Activated T-helper 2 cell treated with anti-CD3 and anti-CD28 coated beads, Interferon-gamma antibody, Interleukin-2, Interleukin-4, amounts not matched to agents 10 μg/mL and 5 μg/mL and 100 μg/mL, durations not matched to agents 14 hours and 24 hours and 36 hours (primary cell): ENCODE measurements at regions of chr7 and their contacts with region 1.

Region 1: DNA sequence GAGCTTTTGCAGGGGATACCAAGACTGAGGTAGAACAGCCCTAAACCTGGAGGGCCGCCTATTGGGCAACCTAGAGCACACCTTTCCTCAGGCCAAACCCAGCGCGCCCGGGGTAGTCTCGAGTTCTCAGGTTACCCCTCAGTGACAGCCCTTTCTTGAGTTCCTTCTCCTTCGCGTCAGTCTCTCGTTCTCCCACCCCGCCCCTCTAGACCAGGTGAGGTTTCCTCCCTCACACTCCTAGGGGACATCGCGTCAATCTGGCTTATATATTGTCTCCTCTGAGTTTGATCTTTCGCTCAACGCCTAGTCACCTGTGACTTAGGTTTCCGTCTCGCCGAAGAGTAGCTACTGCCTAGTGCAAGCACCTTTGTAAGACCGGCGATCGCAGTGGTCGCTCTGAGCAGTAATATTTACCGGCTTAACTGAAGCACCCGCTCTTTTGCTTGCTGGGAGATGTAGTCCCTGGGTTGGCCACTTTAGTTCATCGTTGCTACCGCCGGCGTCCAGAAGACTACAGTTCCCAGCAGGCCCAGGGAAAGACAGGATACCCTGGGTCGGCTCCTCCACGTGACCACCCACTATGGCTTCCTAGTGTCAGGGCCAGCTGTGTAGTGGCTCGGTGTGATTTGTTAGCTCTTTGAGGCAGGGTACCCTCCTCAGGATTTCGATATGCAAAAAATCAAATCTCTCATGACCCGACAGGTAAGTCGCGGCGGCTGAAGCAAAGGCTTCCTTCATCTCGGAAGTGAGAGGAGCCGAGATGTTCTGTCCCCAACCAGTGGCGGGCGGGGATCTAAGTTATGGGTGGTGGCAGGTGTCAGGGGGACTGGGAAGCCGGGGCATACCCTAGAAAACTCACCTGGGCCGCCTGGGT is at the start of gene VPS50:
- DNase-seq: peak; percentile 89
- H3K4me3 Mint-ChIP-seq: peak within 1 kb of the TSS; percentile 96
- H3K27ac Mint-ChIP-seq: peak within 1 kb of the TSS; percentile 85
- H3K4me1 Mint-ChIP-seq: peaks cover 13% of the 10 kb centered on the region
- H3K27me3 Mint-ChIP-seq: peaks cover 4% of the 10 kb centered on the region
- total RNA-seq, gene VPS50: 14.8 and 15.6 TPM in 2 replicates

Region 2: GRCh38 chr7:92528188-92528957 is 703.7 kb before region 1 on chr7 and contains the starts of genes PEX1 and RBM48:
- intact Hi-C with region 1: loop called (anchors 1 kb)
- DNase-seq: peak; percentile 96
- H3K4me3 Mint-ChIP-seq: peak within 1 kb of the TSS; percentile 92
- H3K27ac Mint-ChIP-seq: peak within 1 kb of the TSS; percentile 95
- H3K4me1 Mint-ChIP-seq: peaks cover 20% of the 10 kb centered on the region
- H3K27me3 Mint-ChIP-seq: no peaks in the 10 kb centered on the region
- total RNA-seq, gene PEX1: 15.1 TPM in 2 replicates
- total RNA-seq, gene RBM48: 15.2 and 16.8 TPM in 2 replicates

Region 3: GRCh38 chr7:93092757-93093370 is 139.2 kb before region 1 on chr7:
- intact Hi-C with region 1: loop called (anchors 1 kb)
- DNase-seq: no peak
- H3K4me3 Mint-ChIP-seq: no peak overlapping the region
- H3K27ac Mint-ChIP-seq: no peak overlapping the region
- H3K4me1 Mint-ChIP-seq: no peaks in the 10 kb centered on the region
- H3K27me3 Mint-ChIP-seq: peaks cover 23% of the 10 kb centered on the region

Region 4: DNA sequence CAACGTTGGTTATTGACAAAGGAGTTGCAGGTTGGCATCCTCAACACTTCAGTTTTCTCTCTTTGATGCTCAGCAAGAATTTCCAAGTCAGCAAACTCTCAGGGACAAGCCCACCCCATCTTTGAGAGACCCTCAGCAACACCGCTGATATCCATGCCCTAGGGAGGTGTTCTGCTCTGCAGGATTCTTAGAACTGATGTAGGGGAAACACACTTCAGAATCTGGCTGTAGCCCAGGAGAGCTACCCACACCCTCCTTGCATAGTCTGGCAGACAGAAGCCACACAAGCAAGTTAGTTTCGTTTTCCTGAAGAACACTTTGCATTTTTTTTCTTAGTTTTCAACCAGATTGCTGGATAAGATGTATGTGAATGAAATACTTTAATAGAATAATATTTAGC is 84.7 kb before region 1 on chr7:
- intact Hi-C with region 1: loop called (anchors 2 kb)
- DNase-seq: peak; percentile 22
- H3K4me3 Mint-ChIP-seq: peak overlapping the region; percentile 87
- H3K27ac Mint-ChIP-seq: peak overlapping the region; percentile 89
- H3K4me1 Mint-ChIP-seq: peaks cover 36% of the 10 kb centered on the region
- H3K27me3 Mint-ChIP-seq: no peaks in the 10 kb centered on the region

Region 5: GRCh38 chr7:94004024-94004951 is 772.3 kb after region 1 on chr7 and contains the start of gene BET1:
- intact Hi-C with region 1: loop called (anchors 5 kb)
- DNase-seq: peak; percentile 87
- H3K4me3 Mint-ChIP-seq: peak within 1 kb of the TSS; percentile 96
- H3K27ac Mint-ChIP-seq: peak within 1 kb of the TSS; percentile 94
- H3K4me1 Mint-ChIP-seq: peaks cover 24% of the 10 kb centered on the region
- H3K27me3 Mint-ChIP-seq: peaks cover 16% of the 10 kb centered on the region
- total RNA-seq, gene BET1: 19.4 and 22.3 TPM in 2 replicates